Aorta (tissue), 5 donors: ENCODE measurements at regions of chr1 and their contacts with region 1.

Region 1: GRCh38 chr1:81756872-81757271 is 43.9 kb upstream of the ADGRL2 start:
- DNase-seq: no peak
- ATAC-seq: no peak
- H3K4me3 ChIP-seq: no peak overlapping the region
- H3K27ac ChIP-seq: no peak overlapping the region
- H3K4me1 ChIP-seq: no peaks in the 10 kb centered on the region
- H3K27me3 ChIP-seq: no peaks in the 10 kb centered on the region

Region 2: GRCh38 chr1:80909172-80909784 is 847.6 kb before region 1 on chr1:
- intact Hi-C with region 1: loop called in 1 of 2 experiments (anchors 10 kb)
- DNase-seq: no peak
- ATAC-seq: no peak
- H3K4me3 ChIP-seq: no peak overlapping the region
- H3K27ac ChIP-seq: no peak overlapping the region
- H3K4me1 ChIP-seq: no peaks in the 10 kb centered on the region
- H3K27me3 ChIP-seq: no peaks in the 10 kb centered on the region

Region 3: GRCh38 chr1:81296601-81297000 is 460.3 kb before region 1 on chr1:
- intact Hi-C with region 1: loop called in 1 of 2 experiments (anchors 10 kb)
- DNase-seq: no peak
- ATAC-seq: no peak
- H3K4me3 ChIP-seq: no peak overlapping the region
- H3K27ac ChIP-seq: no peak overlapping the region
- H3K4me1 ChIP-seq: no peaks in the 10 kb centered on the region
- H3K27me3 ChIP-seq: no peaks in the 10 kb centered on the region

Region 4: DNA sequence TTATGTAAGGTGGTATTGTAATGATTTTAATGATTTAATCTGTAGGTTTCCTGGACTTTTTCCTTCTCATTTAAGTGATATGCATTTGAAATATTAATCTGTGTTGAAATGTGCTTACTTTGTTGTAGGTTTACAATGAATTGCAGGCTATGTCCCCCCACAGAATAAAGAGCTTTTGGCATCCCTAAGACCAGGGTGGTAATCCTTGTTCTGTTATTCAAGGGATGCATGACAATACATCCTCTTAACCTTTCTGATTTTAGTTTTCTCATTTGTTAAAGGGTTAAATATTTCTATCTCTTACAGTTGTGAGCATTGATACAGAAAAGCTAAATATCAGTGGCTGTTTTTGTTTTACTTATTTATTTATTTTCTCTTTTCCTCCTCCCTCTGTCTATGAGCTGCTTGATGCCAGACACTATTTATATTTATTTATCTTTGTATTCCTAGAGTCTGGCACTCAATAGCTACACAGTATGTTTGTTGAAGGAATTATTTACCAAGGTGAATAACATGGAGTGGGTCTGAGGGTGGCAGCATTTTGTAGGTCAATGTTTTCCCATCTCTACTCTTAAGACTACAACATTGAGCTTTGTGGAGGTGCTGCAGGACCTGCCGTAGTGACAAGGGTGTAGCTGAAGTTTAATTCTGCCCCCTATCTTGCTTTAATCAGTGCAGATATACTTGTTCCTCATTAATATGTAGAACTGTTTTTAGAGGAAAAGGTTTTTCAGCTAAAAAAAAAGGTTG is 24.0 kb after region 1 on chr1:
- intact Hi-C with region 1: no loop called
- DNase-seq: no peak
- ATAC-seq: no peak
- H3K4me3 ChIP-seq: no peak overlapping the region
- H3K27ac ChIP-seq: no peak overlapping the region
- H3K4me1 ChIP-seq: no peaks in the 10 kb centered on the region
- H3K27me3 ChIP-seq: no peaks in the 10 kb centered on the region